Activated B cell treated with CpG ODN at 0.5 μM for 24 hours (primary cell): ENCODE measurements at regions of chr22 and their contacts with region 1.

Region 1: DNA sequence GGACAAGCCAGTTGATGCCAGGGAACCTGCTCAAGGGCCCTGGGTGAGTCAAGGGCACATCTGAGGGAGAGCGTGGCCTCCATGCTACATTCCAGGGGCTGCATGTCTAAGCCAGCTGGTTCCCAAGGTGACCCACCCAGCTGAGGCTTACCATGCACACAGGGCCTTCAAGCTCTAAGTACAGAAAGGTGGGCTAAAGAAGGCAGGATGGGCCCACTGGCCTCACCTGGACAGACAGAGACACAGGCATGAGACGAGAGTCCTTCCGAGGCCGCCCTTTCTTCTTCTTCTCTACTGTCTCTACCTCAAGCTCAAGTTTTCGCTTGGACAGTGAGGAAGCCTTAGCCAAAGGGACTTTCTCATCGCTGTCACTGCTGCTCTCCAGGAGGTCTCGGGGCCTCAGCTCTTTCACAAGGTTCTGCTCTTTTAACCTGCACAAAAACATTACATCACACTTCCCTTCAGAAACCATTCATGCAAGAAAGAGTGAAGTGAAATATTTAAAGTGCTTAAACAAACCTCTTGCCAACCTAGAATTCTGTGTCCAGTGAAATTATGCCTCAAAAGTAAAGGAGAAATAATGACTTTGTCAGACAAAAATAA is 69.9 kb downstream of the HIRA start:
- DNase-seq: peak; percentile 41
- ATAC-seq: peak; percentile 90
- H3K4me3 Mint-ChIP-seq: peak overlapping the region; percentile 71
- H3K27ac Mint-ChIP-seq: peak overlapping the region; percentile 95
- H3K4me1 Mint-ChIP-seq: peaks cover 80% of the 10 kb centered on the region
- H3K27me3 Mint-ChIP-seq: no peaks in the 10 kb centered on the region
- CTCF ChIP-seq: no peak

Region 2: GRCh38 chr22:19400881-19401280 is 39.3 kb after region 1 on chr22:
- CTCF ChIA-PET with region 1: no interaction called
- POLR2A ChIA-PET with region 1: no interaction called
- intact Hi-C with region 1: loop called (anchors 5 kb)
- DNase-seq: no peak
- ATAC-seq: no peak
- H3K4me3 Mint-ChIP-seq: no peak overlapping the region
- H3K27ac Mint-ChIP-seq: no peak overlapping the region
- H3K4me1 Mint-ChIP-seq: peaks cover 15% of the 10 kb centered on the region
- H3K27me3 Mint-ChIP-seq: no peaks in the 10 kb centered on the region
- CTCF ChIP-seq: no peak

Region 3: GRCh38 chr22:19432133-19432851 is 70.7 kb after region 1 on chr22 and contains the start of gene MRPL40:
- CTCF ChIA-PET with region 1: interaction called, 3 read pairs
- POLR2A ChIA-PET with region 1: interaction called, 66 read pairs
- intact Hi-C with region 1: loop called (anchors 1 kb)
- DNase-seq: peak; percentile 83
- ATAC-seq: peak; percentile 87
- H3K4me3 Mint-ChIP-seq: peak within 1 kb of the TSS; percentile 90
- H3K27ac Mint-ChIP-seq: peak within 1 kb of the TSS; percentile 91
- H3K4me1 Mint-ChIP-seq: peaks cover 59% of the 10 kb centered on the region
- H3K27me3 Mint-ChIP-seq: no peaks in the 10 kb centered on the region
- CTCF ChIP-seq: no peak
- total RNA-seq, gene MRPL40: 24.0 and 24.3 TPM in 2 replicates

Region 4: DNA sequence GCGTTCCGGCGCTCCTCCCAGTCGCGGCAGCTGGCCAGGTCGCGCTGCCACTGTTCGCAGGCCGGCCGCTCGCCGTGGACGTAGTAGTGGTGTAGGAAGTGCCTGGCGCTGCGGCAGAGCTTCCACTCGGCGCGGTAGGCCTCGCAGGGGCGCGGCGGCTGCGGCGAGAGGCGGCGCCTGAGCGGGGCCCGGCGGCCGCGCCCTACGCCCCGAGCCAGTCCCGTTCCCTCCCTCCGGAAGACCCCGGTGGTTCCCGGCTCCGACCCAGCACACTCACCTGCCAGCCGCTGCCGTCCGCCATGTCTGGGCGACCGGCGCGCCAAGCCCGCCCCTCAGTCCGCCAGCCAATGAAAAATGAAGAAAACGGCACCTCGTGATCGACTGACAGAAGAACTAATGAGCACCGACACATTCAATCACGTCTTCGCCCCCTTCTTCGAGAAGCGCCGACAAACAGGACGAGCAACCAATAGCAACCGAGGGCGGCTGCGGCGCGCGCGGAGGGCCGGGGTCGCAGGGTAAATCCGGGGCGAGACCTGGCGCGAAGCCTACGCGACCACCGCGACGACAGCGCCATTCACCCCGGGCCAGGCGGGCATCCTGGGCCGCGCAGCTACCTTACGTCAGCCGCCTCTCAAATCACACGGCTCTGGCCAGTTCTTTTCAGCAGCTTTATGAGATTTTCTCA is 85.9 kb after region 1 on chr22 and contains the start of gene C22orf39:
- CTCF ChIA-PET with region 1: no interaction called
- POLR2A ChIA-PET with region 1: interaction called, 15 read pairs
- intact Hi-C with region 1: loop called (anchors 5 kb)
- DNase-seq: peak; percentile 78
- ATAC-seq: peak; percentile 85
- H3K4me3 Mint-ChIP-seq: peak within 1 kb of the TSS; percentile 95
- H3K27ac Mint-ChIP-seq: peak within 1 kb of the TSS; percentile 98
- H3K4me1 Mint-ChIP-seq: peaks cover 31% of the 10 kb centered on the region
- H3K27me3 Mint-ChIP-seq: no peaks in the 10 kb centered on the region
- CTCF ChIP-seq: no peak
- total RNA-seq, gene C22orf39: 35.7 and 43.0 TPM in 2 replicates

Region 5: GRCh38 chr22:19591568-19591967 is 230.0 kb after region 1 on chr22:
- CTCF ChIA-PET with region 1: no interaction called
- POLR2A ChIA-PET with region 1: no interaction called
- intact Hi-C with region 1: no loop called
- DNase-seq: no peak
- ATAC-seq: no peak
- H3K4me3 Mint-ChIP-seq: no peak overlapping the region
- H3K27ac Mint-ChIP-seq: no peak overlapping the region
- H3K4me1 Mint-ChIP-seq: peaks cover 3% of the 10 kb centered on the region
- H3K27me3 Mint-ChIP-seq: peaks cover 11% of the 10 kb centered on the region
- CTCF ChIP-seq: no peak